ENCODE measurements at regions of chr1 and their contacts with region 1.

Region 1: GRCh38 chr1:110312188-110313121 is 26.7 kb upstream of the RBM15 start:
- DNase-seq: peak; percentile 90

Region 2: GRCh38 chr1:110040548-110040947 is 271.9 kb before region 1 on chr1:
- CTCF ChIA-PET with region 1: no interaction called
- POLR2A ChIA-PET with region 1: no interaction called
- DNase-seq: no peak

Region 3: GRCh38 chr1:110196917-110197765 is 115.3 kb before region 1 on chr1:
- CTCF ChIA-PET with region 1: interaction called, 382 read pairs
- POLR2A ChIA-PET with region 1: no interaction called
- DNase-seq: peak; percentile 93

Region 4: GRCh38 chr1:110249256-110249655 is 63.2 kb before region 1 on chr1:
- CTCF ChIA-PET with region 1: no interaction called
- POLR2A ChIA-PET with region 1: no interaction called
- DNase-seq: no peak

Region 5: DNA sequence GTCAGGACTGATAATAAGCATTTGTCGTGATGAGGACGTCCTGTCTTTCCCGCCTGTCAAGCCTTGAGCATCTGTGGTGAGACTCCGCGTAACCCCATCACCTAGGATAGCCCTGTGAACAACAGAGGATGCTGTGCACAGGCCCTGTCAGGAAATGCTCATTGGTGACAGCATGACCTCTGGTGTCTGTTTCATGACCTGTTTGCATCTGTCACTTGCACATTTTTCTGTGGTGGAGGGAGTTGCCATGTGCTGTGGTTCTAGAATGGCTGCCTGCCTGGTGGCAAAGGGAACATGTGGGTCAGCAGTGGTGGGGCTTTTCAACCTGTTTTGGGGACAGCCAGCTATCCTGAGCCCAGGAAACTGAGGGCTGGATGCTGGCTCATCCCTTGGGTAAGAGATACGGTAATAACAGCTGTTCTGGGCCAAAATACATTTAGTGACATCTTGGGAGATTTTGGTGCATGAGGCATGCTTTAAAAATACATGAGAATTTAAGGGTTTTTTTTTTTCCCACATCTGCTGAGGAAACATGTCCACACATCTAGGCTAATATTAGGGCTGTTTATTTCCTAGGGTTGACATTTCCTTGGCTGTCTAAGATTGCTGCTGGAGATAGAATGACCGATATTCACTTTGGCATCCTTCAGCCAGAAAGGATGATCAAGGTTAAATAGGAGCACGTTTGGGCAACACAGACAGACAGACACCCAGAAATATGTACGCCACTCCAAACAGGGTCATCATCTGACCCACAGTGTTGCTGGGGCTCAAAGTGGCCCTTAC is 49.4 kb before region 1 on chr1:
- CTCF ChIA-PET with region 1: no interaction called
- POLR2A ChIA-PET with region 1: no interaction called
- DNase-seq: no peak

Region 6: GRCh38 chr1:110292031-110292741 is 20.3 kb before region 1 on chr1:
- CTCF ChIA-PET with region 1: interaction called, 12 read pairs
- POLR2A ChIA-PET with region 1: interaction called, 3 read pairs
- DNase-seq: peak; percentile 40

Measured in HEK293T (cell line).